ENCODE measurements at regions of chr9 and their contacts with region 1.

Region 1: GRCh38 chr9:21812946-21813568 is 10.6 kb downstream of the MTAP start:
- DNase-seq: peak; percentile 76
- H3K4me3 Mint-ChIP-seq: no peak overlapping the region
- H3K27ac Mint-ChIP-seq: no peak overlapping the region
- H3K4me1 Mint-ChIP-seq: peaks cover 56% of the 10 kb centered on the region
- H3K27me3 Mint-ChIP-seq: no peaks in the 10 kb centered on the region

Region 2: DNA sequence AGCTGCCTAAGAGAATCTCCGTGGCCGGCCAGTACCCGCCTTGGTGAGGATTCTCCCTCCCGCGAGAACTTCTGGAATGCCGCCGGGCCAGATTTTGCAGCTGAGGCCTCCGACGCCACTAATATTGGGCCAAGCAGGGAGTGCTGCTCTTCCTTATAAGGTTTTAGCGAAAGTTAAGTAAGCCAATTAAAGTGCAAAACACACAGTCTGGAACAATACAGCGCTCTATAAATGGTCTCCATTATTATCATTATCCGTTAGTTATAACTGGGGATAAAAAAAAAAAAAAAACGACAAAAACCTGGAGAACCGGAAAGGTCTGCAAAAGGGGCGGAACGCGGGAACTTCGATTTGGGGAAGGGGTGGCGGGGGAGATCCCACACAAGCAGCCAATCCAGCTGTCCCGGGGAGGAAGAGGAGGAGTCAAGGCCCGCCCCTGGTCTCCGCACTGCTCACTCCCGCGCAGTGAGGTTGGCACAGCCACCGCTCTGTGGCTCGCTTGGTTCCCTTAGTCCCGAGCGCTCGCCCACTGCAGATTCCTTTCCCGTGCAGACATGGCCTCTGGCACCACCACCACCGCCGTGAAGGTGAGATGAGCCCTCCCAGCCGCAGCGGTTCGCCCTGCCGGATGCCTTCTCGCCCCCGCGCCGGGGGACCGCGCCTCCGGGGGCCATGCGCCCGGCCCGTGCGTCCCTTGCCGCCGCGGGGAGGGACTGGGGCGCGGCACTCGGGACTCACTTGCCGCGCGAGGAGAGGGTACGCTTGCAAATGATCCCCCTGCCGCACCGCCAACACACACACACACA is 10.7 kb before region 1 on chr9 and contains the start of gene MTAP:
- CTCF ChIA-PET with region 1: interaction called, 11 read pairs
- intact Hi-C with region 1: no loop called
- DNase-seq: peak; percentile 82
- H3K4me3 Mint-ChIP-seq: peak within 1 kb of the TSS; percentile 99
- H3K27ac Mint-ChIP-seq: peak within 1 kb of the TSS; percentile 97
- H3K4me1 Mint-ChIP-seq: peaks cover 41% of the 10 kb centered on the region
- H3K27me3 Mint-ChIP-seq: peaks cover 4% of the 10 kb centered on the region
- total RNA-seq, gene MTAP: 59.0 to 66.4 TPM

Region 3: DNA sequence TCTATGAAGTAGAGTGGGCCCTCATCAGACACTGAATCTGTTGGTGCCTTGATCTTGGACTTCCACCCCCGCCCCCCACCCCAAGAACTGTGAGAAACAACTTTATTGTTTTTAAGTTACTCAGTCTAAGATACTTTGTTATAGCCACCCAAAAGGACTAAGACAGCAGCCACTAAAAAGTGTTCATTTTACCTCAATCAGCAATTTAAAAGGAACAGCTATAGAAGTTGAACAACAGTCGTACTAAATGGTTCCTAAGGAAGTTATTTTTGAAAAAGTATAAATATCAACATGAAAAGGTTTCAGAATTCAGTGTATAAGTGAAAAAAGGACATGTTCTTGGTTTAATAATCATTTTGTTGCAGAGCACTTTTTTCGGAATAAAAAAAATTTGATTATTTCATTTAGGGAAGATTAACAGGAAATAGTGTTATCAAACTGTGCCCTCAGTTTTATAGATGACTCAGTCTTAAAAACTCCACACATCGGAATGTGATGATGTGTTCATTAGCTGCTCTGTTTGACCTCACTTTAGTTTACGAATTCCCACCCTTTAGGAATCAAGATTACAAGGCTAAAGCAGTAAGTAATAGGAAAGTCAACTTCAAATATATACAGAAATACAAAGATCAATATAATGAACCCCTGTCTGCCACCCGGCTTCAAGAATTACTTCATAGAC is 60.6 kb after region 1 on chr9:
- CTCF ChIA-PET with region 1: no interaction called
- intact Hi-C with region 1: no loop called
- DNase-seq: no peak
- H3K4me3 Mint-ChIP-seq: no peak overlapping the region
- H3K27ac Mint-ChIP-seq: no peak overlapping the region
- H3K4me1 Mint-ChIP-seq: peaks cover 2% of the 10 kb centered on the region
- H3K27me3 Mint-ChIP-seq: no peaks in the 10 kb centered on the region

Region 4: GRCh38 chr9:21965401-21965951 is 152.4 kb after region 1 on chr9:
- CTCF ChIA-PET with region 1: interaction called, 3 read pairs
- intact Hi-C with region 1: loop called (anchors 1 kb)
- DNase-seq: peak; percentile 68
- H3K4me3 Mint-ChIP-seq: peak overlapping the region; percentile 51
- H3K27ac Mint-ChIP-seq: no peak overlapping the region
- H3K4me1 Mint-ChIP-seq: peaks cover 17% of the 10 kb centered on the region
- H3K27me3 Mint-ChIP-seq: peaks cover 86% of the 10 kb centered on the region

Region 5: DNA sequence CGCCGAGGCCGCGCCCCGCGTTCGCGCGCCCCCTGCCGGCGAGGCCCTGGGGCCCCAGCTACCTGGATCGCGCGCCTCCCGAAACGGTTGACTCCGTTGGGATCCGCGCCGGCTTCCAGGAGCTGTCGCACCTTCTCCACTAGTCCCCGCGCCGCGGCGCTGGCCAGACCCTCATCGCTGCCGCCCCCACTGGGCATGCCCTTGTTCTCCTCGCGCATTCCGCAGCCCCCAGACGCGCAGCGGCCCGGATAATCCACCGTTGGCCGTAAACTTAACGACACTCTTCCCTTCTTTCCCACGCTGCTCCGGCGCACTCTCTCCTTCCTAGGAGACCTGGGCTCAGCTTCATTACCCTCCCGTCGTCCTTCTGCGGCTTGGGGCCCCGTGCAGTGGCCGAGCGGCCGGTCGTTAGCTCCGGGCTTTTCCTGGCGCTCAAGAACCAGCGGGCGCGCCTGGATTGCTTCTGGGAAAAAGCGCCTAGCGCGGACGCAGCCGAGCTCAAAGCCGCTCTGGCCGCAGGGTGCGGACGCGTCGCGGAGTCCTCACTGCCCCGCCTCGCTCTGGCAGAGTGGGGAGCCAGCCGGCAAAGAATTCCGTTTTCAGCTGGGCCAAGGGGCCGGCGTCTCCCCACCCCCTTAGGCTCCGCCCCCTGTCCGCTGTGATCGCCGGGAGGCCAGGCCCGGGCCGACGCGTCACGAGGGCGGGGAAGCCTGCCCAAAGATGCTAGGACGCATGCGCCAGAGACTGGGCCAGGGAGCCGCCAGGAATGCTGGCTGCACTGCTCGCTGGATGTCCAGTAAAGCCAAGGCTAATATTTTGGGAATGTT is 195.9 kb after region 1 on chr9 and contains the start of gene CDKN2B:
- CTCF ChIA-PET with region 1: interaction called, 68 read pairs
- intact Hi-C with region 1: loop called (anchors 1 kb)
- DNase-seq: peak; percentile 63
- H3K4me3 Mint-ChIP-seq: peak within 1 kb of the TSS; percentile 74
- H3K27ac Mint-ChIP-seq: no peak within 1 kb of the TSS
- H3K4me1 Mint-ChIP-seq: peaks cover 18% of the 10 kb centered on the region
- H3K27me3 Mint-ChIP-seq: peaks cover 62% of the 10 kb centered on the region
- total RNA-seq, gene CDKN2B: not detected

Region 6: DNA sequence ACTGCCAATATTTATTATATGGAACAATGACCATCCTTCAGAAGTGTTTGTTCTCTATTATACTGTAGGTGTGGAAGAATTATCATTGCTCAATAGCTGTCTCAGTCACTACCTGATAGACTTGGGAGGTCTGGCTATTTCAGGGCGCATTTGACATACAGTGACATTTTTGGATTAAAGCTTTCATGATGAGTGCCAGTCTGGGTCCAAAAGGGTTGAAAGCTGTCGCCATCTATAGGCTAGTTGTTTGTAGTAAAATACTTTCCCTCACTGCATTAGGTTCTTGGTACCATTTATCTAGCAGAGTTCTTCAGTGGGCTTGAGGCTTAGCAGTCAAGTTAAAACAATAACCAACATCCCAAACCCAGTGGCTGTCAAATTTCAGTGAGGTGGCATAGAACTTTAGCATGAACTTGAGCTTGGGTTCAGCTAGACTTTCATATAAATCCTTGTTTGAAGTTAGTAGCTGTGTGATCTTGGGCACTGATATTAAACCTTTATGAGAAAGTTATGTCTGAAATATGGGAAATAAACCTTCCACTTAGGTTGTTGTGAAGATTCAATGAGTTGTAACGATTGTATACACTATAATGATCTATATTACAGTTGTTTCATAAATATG is 306.6 kb after region 1 on chr9:
- CTCF ChIA-PET with region 1: interaction called, 12 read pairs
- intact Hi-C with region 1: loop called (anchors 1 kb)
- DNase-seq: peak; percentile 32
- H3K4me3 Mint-ChIP-seq: no peak overlapping the region
- H3K27ac Mint-ChIP-seq: no peak overlapping the region
- H3K4me1 Mint-ChIP-seq: no peaks in the 10 kb centered on the region
- H3K27me3 Mint-ChIP-seq: peaks cover 9% of the 10 kb centered on the region

Region 7: GRCh38 chr9:22211593-22212360 is 398.7 kb after region 1 on chr9:
- CTCF ChIA-PET with region 1: no interaction called
- intact Hi-C with region 1: no loop called
- DNase-seq: no peak
- H3K4me3 Mint-ChIP-seq: no peak overlapping the region
- H3K27ac Mint-ChIP-seq: no peak overlapping the region
- H3K4me1 Mint-ChIP-seq: peaks cover 29% of the 10 kb centered on the region
- H3K27me3 Mint-ChIP-seq: peaks cover 4% of the 10 kb centered on the region

Region 8: GRCh38 chr9:22244141-22245011 is 431.3 kb after region 1 on chr9:
- CTCF ChIA-PET with region 1: interaction called, 21 read pairs
- intact Hi-C with region 1: loop called (anchors 1 kb)
- DNase-seq: peak; percentile 46
- H3K4me3 Mint-ChIP-seq: no peak overlapping the region
- H3K27ac Mint-ChIP-seq: no peak overlapping the region
- H3K4me1 Mint-ChIP-seq: peaks cover 29% of the 10 kb centered on the region
- H3K27me3 Mint-ChIP-seq: peaks cover 19% of the 10 kb centered on the region